MCF 10A (cell line): ENCODE measurements at regions of chr1 and their contacts with region 1.

Region 1: DNA sequence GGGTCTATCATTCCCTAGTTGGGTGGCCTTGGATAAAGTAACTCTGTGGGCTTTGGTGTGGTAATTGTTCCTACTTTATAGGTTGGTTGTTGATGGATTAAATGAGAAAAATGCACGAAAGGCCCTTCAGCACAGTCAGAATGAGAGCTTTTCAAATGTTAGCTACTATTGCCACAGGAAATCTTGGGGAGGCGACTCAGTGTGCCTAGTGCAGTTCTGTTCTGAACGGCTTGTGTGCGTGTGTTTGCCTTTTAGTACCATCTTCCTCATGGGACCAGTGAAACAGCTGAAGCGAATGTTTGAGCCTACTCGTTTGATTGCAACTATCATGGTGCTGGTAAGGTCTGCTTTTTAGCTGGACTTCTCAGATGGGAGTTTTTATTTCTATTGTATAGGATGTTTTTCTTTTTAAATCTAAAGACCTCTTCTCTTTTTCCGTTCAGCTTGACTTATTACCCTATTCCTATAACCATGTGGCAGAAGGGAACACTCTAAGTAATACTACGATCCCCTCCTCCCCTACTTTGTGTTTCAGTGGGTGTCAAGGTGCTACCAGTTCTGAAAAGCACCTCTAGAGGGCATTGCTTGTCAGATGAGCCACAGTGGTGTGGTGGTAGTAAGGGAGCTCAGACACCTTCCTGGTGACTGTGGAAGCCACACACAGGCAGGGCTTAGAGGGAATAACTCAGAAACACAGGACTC is 9.2 kb downstream of the SFT2D2 start:
- DNase-seq: peak; percentile 84
- H3K4me3 Mint-ChIP-seq: no peak overlapping the region
- H3K27ac Mint-ChIP-seq: no peak overlapping the region
- H3K4me1 Mint-ChIP-seq: peaks cover 24% of the 10 kb centered on the region
- H3K27me3 Mint-ChIP-seq: no peaks in the 10 kb centered on the region
- CTCF ChIP-seq: peak; percentile 81

Region 2: GRCh38 chr1:168092566-168093355 is 142.2 kb before region 1 on chr1:
- CTCF ChIA-PET with region 1: interaction called, 14 read pairs
- POLR2A ChIA-PET with region 1: no interaction called
- intact Hi-C with region 1: loop called (anchors 1 kb)
- DNase-seq: peak; percentile 57
- H3K4me3 Mint-ChIP-seq: no peak overlapping the region
- H3K27ac Mint-ChIP-seq: no peak overlapping the region
- H3K4me1 Mint-ChIP-seq: peaks cover 4% of the 10 kb centered on the region
- H3K27me3 Mint-ChIP-seq: no peaks in the 10 kb centered on the region
- CTCF ChIP-seq: peak; percentile 61

Region 3: DNA sequence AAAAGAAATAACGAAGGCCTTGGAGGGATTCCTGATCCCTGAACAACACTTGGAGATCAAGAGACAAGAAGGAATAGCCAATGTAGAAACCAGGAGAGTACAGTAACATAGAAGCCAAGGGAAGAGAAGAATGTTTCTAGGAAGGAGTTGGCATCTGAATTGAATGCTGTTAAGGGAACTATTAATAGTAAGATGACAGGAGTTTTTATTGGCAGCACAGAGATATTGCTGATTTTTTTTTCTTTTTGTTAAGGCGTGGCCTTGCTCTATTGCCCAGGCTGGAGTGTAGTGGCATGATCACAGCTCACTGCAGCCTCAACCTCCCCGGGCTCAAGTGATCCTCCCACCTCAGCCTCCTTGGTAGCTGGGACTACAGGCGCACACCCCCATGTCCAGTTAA is 18.8 kb before region 1 on chr1:
- CTCF ChIA-PET with region 1: interaction called, 18 read pairs
- POLR2A ChIA-PET with region 1: no interaction called
- intact Hi-C with region 1: no loop called
- DNase-seq: no peak
- H3K4me3 Mint-ChIP-seq: no peak overlapping the region
- H3K27ac Mint-ChIP-seq: no peak overlapping the region
- H3K4me1 Mint-ChIP-seq: peaks cover 6% of the 10 kb centered on the region
- H3K27me3 Mint-ChIP-seq: no peaks in the 10 kb centered on the region
- CTCF ChIP-seq: no peak

Region 4: GRCh38 chr1:168261390-168261789 is 26.4 kb after region 1 on chr1:
- CTCF ChIA-PET with region 1: interaction called, 40 read pairs
- POLR2A ChIA-PET with region 1: interaction called, 4 read pairs
- intact Hi-C with region 1: no loop called
- DNase-seq: peak; percentile 30
- H3K4me3 Mint-ChIP-seq: no peak overlapping the region
- H3K27ac Mint-ChIP-seq: no peak overlapping the region
- H3K4me1 Mint-ChIP-seq: peaks cover 23% of the 10 kb centered on the region
- H3K27me3 Mint-ChIP-seq: no peaks in the 10 kb centered on the region
- CTCF ChIP-seq: no peak

Region 5: DNA sequence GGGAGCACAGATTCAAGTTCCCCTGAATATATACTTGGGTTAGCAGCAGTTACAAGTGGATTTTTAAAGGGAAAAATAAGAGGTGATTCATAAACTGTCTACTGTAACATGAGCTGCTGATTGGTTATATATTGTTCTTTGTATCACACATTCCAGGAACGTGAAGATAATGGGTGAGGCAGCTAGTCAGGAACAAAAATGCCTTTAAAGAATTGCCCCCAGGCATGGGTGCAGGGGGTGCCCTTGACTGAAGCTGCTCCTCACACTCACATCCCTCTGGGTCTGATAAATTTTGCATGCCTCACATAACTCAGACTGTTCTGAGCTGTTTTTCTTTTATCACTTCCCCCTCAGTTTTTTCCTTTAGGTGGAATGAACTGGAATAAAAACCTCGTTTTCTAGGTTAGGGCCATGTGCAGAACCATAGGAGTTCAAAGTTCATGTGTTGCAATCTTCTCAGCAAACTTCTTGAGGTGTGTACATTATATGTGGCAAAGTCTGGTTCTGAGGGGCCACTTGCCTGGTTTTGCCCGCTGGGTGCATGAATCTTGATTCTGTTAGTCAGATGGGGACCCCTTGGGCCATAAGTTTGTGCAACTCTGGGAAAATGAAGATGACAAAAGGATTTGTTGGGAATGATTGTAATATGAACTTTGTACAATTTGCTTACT is 66.8 kb after region 1 on chr1:
- CTCF ChIA-PET with region 1: interaction called, 22 read pairs
- POLR2A ChIA-PET with region 1: interaction called, 3 read pairs
- intact Hi-C with region 1: no loop called
- DNase-seq: peak; percentile 88
- H3K4me3 Mint-ChIP-seq: no peak overlapping the region
- H3K27ac Mint-ChIP-seq: peak overlapping the region; percentile 78
- H3K4me1 Mint-ChIP-seq: peaks cover 37% of the 10 kb centered on the region
- H3K27me3 Mint-ChIP-seq: no peaks in the 10 kb centered on the region
- CTCF ChIP-seq: no peak

Region 6: GRCh38 chr1:168321945-168322344 is 86.9 kb after region 1 on chr1:
- CTCF ChIA-PET with region 1: interaction called, 94 read pairs
- POLR2A ChIA-PET with region 1: interaction called, 17 read pairs
- intact Hi-C with region 1: loop called (anchors 1 kb)
- DNase-seq: peak; percentile 76
- H3K4me3 Mint-ChIP-seq: no peak overlapping the region
- H3K27ac Mint-ChIP-seq: no peak overlapping the region
- H3K4me1 Mint-ChIP-seq: peaks cover 13% of the 10 kb centered on the region
- H3K27me3 Mint-ChIP-seq: no peaks in the 10 kb centered on the region
- CTCF ChIP-seq: peak; percentile 52

Region 7: DNA sequence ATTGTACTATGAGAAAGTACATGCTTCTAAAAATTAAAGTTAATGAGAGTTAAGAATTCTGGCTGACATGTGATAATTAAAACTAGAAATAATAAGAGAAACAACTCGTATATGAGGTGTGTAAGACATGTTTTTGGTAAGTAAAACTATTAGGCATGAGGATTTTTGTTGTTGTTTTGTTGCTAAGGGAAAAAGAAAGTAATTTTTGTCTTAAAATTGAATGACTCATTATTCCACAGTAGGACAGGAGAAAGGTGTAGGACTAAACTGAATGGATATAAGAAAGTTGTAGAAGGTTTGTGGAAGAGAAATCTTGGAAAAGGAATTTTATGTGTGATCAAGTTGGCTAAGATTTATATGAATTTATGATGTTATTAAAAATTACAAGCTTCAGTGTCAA is 100.5 kb after region 1 on chr1:
- CTCF ChIA-PET with region 1: interaction called, 70 read pairs
- POLR2A ChIA-PET with region 1: no interaction called
- intact Hi-C with region 1: no loop called
- DNase-seq: peak; percentile 6
- H3K4me3 Mint-ChIP-seq: no peak overlapping the region
- H3K27ac Mint-ChIP-seq: no peak overlapping the region
- H3K4me1 Mint-ChIP-seq: peaks cover 6% of the 10 kb centered on the region
- H3K27me3 Mint-ChIP-seq: no peaks in the 10 kb centered on the region
- CTCF ChIP-seq: no peak